Activated T-helper 2 cell treated with anti-CD3 and anti-CD28 coated beads, Interferon-gamma antibody, Interleukin-2, Interleukin-4, amounts not matched to agents 10 μg/mL and 5 μg/mL and 100 μg/mL, durations not matched to agents 14 hours and 24 hours and 36 hours (primary cell): ENCODE measurements at regions of chr17 and their contacts with region 1.

Region 1: DNA sequence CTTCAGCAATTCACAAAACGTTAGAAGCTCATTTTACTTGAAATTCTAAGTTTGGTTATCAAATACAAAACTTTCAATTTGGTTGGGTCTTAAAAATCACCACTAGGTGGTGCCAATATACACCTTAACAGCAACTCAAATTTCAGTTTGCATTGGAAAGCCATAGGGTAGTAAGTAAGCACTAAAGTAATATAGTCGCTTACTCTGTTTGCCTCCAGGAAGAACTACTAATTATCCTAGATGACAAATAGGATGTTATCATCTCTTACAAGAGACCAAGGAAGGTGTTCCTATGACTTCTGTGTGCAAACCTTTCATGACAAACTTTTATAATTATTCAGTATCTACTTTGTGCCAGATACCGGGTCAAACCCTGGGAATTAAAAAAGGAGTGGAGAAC is 93.3 kb downstream of the MYO1D start:
- DNase-seq: no peak
- H3K4me3 Mint-ChIP-seq: no peak overlapping the region
- H3K27ac Mint-ChIP-seq: no peak overlapping the region
- H3K4me1 Mint-ChIP-seq: peaks cover 4% of the 10 kb centered on the region
- H3K27me3 Mint-ChIP-seq: peaks cover 7% of the 10 kb centered on the region

Region 2: GRCh38 chr17:32936894-32937500 is 153.4 kb after region 1 on chr17:
- intact Hi-C with region 1: loop called (anchors 1 kb)
- DNase-seq: peak; percentile 56
- H3K4me3 Mint-ChIP-seq: no peak overlapping the region
- H3K27ac Mint-ChIP-seq: no peak overlapping the region
- H3K4me1 Mint-ChIP-seq: peaks cover 6% of the 10 kb centered on the region
- H3K27me3 Mint-ChIP-seq: peaks cover 4% of the 10 kb centered on the region